GM13976 (cell line): ENCODE measurements at regions of chr4 and their contacts with region 1.

Region 1: GRCh38 chr4:87227751-87228151 is 7.3 kb upstream of the KLHL8 start:
- DNase-seq: no peak
- CTCF ChIP-seq: no peak

Region 2: GRCh38 chr4:86908251-86908657 is 319.5 kb before region 1 on chr4:
- in situ Hi-C with region 1: no loop called
- DNase-seq: no peak
- CTCF ChIP-seq: no peak

Region 3: GRCh38 chr4:87147116-87147515 is 80.6 kb before region 1 on chr4:
- in situ Hi-C with region 1: loop called (anchors 5 kb)
- DNase-seq: no peak
- CTCF ChIP-seq: no peak